Posterior cingulate gyrus (tissue), 11 donors: ENCODE measurements at regions of chr10 and their contacts with region 1.

Region 1: DNA sequence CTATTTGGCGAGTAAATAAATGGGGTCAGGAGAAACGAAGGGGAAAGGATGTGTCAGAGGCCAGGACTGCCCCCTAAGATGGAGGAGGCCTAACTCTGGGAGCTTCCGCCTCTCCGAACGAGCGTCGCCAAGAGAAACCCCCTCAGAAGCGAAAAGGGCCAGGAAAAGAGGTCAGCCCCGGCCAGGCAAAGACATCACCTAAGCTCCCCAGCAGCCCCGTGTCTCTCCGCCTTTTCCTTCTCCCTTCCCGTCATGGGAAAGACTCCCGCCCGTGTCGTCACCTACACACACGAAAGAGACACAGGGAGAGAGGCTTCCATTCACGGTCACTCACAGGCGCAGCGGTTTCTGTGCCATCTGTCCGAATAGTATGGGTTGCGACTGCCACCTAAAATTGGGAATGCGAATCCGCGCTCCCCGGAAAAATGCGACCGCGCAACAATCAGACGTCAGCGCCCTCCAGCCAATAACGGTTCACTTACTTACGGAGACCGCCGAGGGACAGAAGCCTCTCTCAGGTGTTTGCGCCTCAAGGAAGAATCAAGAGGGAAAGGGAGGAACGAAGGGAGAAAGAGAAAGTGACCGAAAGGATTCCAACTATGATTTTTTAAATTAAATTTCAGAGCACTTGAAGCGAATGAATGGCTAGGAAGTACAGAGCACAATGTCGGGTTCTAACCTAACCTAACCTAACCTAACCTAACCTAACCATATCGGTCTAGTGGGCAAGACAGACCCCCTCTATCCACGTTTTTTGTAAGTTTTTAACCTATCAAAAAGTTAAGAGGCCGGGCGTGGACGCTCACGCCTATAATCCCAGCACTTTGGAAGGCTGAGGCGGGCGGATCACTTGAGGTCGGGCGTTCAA is at the start of gene CWF19L1:
- DNase-seq: peak; percentile 81 to 97 (median 86)

Region 2: DNA sequence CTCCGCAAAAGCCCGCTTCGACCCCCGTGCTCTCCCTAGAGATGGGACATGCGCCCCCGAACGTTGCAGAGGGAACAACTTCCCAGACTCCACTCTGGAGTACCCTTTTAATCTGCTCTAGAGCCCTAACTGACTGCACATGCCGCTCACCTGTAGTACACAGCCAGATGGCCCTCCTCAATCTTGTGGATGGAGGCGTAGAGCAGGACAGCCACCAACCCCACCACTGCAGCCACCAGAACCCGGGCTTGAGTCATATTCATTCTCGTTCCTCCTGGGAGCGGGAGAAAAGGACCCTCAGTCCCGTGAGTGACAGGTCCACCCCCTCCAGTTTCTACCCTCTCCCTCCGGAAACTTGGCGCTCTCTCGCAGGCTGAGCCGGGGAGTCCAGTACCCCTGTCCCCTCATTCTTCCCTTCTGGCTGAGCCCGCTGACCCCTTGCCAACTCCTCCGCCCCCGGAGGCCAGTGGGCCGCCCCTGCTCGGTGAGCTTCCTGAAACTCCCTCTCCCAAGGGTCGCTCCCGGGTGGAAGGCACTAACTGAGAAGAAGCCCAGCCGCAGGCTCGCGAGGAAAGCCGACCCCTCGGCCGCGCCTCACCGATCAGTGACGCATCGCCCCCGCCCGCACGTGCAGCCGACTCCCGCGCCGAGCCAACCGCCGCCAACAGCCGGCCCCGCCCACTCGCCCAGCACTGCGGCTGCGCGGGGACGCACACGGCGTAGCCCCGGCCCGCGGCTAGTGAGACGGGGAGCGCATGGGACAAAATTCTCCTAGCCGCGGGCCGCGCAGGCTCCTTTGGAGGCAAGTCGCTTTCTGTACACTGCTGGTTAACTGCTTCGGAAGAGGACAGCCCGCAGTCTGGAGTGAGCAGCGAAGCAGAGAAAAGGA is 81.9 kb before region 1 on chr10 and contains the start of gene ERLIN1:
- intact Hi-C with region 1: loop called (anchors 1 kb)
- DNase-seq: peak; percentile 81 to 98 (median 85)